ENCODE measurements at regions of chr17 and their contacts with region 1.

Region 1: DNA sequence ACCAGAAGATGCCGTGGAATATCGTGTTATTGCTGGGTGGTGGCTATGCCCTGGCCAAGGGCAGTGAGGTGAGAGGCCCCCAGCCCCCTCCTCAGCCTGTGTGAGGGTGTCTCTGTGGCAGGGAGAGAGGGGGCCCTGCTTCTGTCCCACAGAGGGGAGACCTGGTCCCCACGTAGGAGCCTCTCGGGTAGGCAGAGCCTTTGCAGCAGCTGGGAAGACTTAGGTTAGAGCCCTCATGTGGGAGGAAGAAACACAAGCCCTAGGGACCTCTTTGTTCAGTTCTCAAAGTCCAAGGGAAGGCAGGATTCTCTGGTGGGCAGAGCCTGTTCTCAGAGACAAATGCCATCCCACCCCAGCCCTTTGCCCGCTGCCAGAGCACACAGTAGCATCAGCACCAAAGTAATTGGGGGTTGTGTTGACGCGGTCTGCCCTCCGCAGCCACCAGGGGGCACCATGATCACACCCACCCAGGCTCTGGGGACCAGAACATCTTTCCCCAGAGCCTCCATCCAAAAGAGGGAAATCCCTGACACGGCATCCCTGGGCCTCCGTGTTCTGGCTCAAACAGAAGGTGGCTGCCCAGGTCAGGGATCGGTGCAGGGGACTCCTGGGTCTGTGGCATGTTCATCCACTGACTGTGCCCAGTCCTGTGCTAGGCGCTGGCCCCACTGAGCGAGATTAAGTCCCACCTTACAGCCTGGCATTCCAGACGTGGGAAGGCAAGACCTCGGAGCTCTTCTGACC is 11.5 kb upstream of the FOXN1 start:
- DNase-seq: peak; percentile 65 to 82
- ATAC-seq: peak; percentile 63 to 79 (median 74)
- H3K4me3 ChIP-seq: no peak overlapping the region
- H3K27ac ChIP-seq: no peak overlapping the region
- H3K4me1 ChIP-seq: no peaks in the 10 kb centered on the region
- H3K27me3 ChIP-seq: peaks cover 0 to 6% (median 0%) of the 10 kb centered on the region in 3 donors
- CTCF ChIP-seq: peak; percentile 75

Region 2: DNA sequence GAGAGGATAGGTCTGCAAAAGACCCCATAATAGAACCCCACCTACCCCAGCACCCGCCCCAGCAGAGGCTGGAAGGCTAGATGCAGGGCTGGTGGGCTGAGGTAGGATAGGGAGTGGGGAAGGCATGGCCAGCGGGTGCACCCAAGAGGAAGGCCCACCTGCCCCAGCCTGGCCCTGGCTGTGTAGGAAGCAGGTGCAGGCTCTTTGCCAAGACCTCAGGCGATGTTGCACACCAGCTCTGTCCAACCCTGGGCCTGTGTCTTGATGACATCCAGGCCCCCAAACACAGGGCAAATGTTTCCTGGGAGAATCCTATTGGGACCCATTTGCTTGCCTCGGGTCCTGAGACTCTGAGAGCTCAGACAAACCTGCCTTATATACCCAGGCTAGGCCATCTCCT is 45.6 kb after region 1 on chr17:
- intact Hi-C with region 1: loop called (anchors 1 to 5 kb)
- DNase-seq: no peak
- ATAC-seq: no peak
- H3K4me3 ChIP-seq: no peak overlapping the region
- H3K27ac ChIP-seq: no peak overlapping the region
- H3K4me1 ChIP-seq: no peaks in the 10 kb centered on the region
- H3K27me3 ChIP-seq: no peaks in the 10 kb centered on the region
- CTCF ChIP-seq: no peak

Region 3: DNA sequence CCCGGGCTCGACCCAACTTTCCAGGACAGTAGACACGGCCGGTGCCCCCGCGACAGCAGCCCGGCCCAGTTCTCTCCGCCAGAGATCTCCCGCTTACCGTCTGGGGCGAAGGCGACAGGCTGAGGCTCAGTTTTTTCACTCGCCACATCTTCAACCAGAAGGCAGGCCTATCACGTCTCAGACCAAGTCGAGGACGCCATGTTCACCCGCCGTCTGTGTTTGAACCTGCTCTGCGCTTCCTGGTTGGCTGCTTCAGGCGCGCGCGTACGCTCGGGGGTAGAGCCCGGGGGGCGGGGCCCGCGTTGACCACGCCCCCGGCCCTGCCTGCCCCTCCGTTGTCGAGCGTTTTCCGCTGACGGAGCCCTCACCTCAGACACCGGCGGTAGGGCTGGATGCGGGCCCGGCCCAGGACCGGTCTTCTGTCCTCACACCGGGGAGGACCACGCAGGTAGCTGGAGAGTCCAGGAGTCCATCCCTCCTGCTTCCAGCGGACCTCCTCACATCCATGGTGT is 104.2 kb after region 1 on chr17 and contains the start of gene SPAG5:
- intact Hi-C with region 1: loop called in 1 of 2 experiments (anchors 5 kb)
- DNase-seq: peak; percentile 90 to 95
- ATAC-seq: peak; percentile 97 to 99 (median 98)
- H3K4me3 ChIP-seq: peak within 1 kb of the TSS; percentile 81
- H3K27ac ChIP-seq: peak within 1 kb of the TSS; percentile 87
- H3K4me1 ChIP-seq: no peaks in the 10 kb centered on the region
- H3K27me3 ChIP-seq: no peaks in the 10 kb centered on the region
- CTCF ChIP-seq: no peak
- total RNA-seq, gene SPAG5: 0.71 to 1.5 (median 1.3) TPM

Region 4: DNA sequence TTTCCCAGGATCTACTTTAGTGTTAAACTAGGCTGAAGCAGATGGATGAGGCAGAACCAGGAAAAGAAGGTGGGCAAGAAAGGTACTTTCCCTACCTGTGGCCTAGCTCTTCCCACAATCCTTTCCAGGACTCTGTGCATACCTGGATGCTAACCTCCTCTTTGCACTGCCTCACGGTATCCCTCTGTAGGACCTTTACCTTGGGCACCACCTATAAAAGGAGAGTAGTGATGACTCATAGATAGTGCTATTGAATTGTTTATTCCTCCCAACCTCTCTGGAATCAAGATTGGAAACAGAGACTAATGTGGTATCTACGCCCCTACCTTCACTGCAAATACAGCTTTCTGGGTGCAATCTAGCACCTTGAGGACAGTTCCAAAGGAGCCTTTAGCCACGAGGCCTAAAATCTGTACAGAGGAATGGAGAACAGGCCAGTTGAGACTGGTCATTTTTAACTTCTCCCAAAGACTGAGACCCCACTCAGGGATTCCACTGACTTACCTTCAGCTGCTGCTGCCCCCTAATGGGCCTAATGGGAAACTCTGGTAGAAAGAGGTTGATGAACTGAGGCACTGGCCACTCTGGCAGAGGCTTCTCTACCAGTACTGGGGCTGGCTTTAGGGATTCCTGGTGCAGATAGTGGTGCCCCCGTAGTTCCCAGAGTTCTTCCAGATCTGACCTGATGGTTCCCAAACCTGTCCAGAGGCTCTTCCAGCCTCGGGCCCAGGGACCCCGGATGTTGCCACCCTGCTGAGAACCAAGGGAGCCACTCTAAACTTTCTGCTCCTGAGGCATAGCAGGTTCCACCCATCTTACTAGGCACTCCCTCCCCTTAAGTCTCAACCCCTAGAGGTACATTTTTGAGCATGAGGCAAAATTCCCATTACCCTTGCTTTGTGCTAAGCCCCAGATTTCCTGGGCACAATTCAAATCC is 118.6 kb after region 1 on chr17:
- intact Hi-C with region 1: loop called (anchors 2 to 5 kb)
- DNase-seq: no peak
- ATAC-seq: peak in 2 of 4 donors; percentile 55 to 57
- H3K4me3 ChIP-seq: no peak overlapping the region
- H3K27ac ChIP-seq: no peak overlapping the region
- H3K4me1 ChIP-seq: no peaks in the 10 kb centered on the region
- H3K27me3 ChIP-seq: no peaks in the 10 kb centered on the region
- CTCF ChIP-seq: peak; percentile 54

Region 5: DNA sequence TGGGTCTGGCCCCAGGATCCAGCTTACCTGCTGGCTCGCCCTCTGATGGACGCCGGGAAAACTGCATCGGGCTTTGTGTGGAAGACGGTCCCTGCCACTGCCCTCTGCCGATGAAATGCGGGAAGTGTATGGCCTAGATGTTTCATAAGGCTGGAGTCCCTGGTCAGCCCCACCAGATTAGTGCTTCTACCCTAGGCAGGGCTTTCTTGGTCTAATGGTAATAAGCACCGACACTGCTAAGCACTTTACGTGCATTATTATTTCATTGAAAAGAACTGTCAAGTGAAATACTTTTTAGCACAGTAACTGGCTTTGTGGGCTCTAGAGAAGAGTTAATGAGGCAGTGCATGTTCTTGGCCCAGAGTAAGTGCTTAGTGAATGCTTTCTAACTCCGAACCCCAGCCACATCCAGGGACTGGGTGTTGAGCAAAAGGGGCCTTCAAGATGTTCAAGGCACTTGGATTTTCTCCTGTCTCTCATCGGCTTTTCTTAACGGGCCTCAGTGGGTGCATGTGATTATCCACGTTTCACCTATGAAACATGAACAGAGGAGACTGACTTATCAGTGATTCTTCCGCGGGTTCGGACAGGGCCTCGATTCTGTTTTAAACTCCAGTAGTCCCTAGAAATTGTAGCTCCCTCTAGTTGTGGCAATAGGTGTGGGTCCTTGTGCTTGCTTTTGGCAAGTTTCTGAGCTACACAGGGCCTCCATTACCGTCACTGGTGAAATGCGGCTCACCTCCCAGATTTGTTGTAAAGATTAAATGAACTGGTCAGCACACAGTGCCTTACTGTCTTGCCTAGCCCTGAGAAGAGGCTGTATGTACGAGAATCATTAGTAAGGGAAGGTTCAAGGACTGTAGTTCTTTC is 255.8 kb after region 1 on chr17:
- intact Hi-C with region 1: no loop called
- DNase-seq: peak; percentile 92 to 95
- ATAC-seq: peak; percentile 83 to 91 (median 88)
- H3K4me3 ChIP-seq: no peak overlapping the region
- H3K27ac ChIP-seq: no peak overlapping the region
- H3K4me1 ChIP-seq: peaks cover 12% of the 10 kb centered on the region
- H3K27me3 ChIP-seq: no peaks in the 10 kb centered on the region
- CTCF ChIP-seq: peak; percentile 100

Measured in psoas muscle (tissue), 8 donors.